ENCODE measurements at regions of chrX and their contacts with region 1.

Region 1: DNA sequence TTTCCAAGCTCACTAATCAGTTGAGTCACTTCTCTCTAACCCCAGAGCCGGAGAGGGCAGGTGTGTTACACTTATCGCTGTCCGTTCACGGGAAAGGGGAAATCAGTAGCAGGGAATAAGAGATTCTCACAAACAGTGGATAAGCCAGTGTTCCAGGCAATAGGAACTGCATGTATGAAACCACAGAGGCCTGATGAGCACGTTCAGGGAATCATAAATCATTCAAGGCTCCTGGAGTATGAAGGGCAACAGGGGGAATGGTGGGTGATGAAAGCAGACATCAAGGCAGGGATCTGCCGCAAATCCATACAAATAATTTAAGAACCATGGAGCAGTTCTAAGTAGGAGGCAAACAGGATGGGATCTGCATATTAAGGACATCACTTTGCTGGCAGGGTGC is 59.1 kb upstream of the ADGRG2 start:
- DNase-seq: no peak
- ATAC-seq: no peak
- H3K4me3 ChIP-seq: no peak overlapping the region
- H3K27ac ChIP-seq: no peak overlapping the region
- H3K4me1 ChIP-seq: peaks cover 0 to 4% (median 0%) of the 10 kb centered on the region in 9 donors
- H3K27me3 ChIP-seq: peaks cover 0 to 4% (median 0%) of the 10 kb centered on the region in 7 donors
- CTCF ChIP-seq: no peak

Region 2: DNA sequence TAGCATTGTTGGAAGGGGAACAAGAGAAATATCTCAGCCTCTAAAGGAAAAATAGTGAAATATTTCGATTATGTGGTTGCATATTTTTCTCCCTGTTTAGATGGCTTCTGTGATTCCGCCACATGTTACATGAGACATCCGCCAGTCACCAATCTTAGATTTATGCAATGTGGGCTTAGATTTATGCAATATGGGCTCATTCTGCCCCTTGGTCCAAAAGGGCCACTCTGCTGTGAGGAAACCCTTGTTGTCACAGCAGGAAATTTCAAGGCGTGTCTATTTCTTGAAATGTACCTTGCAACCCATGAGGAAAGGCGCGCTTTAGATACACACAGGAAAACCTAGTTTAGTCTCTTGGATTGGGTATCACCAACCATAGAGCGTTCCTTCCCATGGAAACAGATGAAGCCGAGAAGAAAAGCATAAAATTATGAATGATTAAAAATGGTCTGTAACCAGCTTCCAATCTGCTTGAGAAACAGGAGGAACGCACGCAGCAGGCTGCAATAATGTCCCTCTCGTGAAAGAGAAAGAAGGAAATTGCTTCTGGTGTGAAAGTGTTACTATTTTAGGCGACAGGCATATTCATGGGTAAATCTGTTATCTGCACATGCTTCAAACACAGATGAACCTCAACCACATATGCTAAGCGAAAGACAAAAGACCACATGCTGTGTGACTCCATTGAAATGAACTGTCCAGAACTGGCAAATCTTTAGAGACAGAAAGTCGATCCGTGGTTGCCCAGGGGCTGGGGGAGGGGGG is 513.1 kb before region 1 on chrX:
- intact Hi-C with region 1: no loop called
- DNase-seq: no peak
- ATAC-seq: no peak
- H3K4me3 ChIP-seq: no peak overlapping the region
- H3K27ac ChIP-seq: no peak overlapping the region
- H3K4me1 ChIP-seq: no peaks in the 10 kb centered on the region
- H3K27me3 ChIP-seq: no peaks in the 10 kb centered on the region
- CTCF ChIP-seq: no peak

Region 3: DNA sequence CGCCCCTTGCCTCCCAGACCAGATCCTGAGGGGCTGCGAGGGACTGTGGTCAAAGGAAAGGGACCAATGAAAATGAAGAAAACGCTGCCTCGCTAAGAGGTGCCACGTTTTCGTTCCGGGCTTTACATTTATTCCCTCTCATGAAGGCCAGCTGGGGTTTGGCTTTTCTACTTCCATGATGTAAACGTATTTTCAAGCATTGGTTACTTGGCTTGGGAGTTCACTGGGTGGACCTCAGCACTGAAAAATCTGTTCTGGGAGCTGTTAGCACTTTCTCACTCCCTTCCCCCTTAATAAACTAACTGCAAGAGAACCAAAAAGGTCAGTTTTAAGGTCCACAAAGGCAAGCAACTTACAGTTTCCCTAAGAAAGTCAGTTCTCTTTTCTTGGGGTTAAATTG is 18.5 kb before region 1 on chrX:
- intact Hi-C with region 1: loop called in 1 of 10 experiments (anchors 1 kb)
- DNase-seq: no peak
- ATAC-seq: no peak
- H3K4me3 ChIP-seq: no peak overlapping the region
- H3K27ac ChIP-seq: no peak overlapping the region
- H3K4me1 ChIP-seq: no peaks in the 10 kb centered on the region
- H3K27me3 ChIP-seq: no peaks in the 10 kb centered on the region
- CTCF ChIP-seq: no peak

Measured in heart right ventricle (tissue), 16 donors.